Activated CD8-positive, alpha-beta memory T cell treated with anti-CD3 and anti-CD28 coated beads, Interleukin-2, amount 10 ng/mL, durations not matched to agents 7 days and 5 days (primary cell): ENCODE measurements at regions of chr10 and their contacts with region 1.

Region 1: DNA sequence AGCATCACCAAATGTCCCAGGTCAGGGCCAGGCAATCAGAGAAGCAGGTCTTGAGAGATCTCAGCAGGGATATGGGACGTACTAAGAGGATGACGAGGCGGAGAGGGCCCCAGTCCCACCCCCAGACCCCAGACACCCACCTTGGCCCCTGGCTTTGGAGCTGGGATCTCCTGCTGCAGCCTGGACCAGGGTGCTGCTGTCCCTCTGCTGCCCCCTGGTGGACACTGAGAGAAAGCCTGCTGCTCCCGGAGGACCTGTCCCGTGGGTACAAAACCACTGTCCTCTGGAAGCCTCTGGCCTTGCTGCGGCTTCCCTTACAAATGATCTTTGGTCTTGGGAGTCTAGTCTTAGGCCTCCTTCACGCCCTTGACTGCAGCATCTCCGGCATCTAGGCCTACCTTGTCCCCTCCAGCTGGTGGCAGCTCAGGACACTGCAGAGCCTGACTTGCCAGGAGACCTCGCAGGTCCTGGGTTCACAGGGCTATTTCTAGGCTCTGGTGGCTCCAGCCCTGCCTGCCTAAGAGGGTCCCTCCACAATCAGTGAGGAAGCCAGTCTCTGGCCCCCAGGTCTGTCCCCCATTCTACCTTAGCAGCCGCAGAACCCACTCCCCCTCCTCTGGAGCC is 97.1 kb downstream of the RGS10 start:
- DNase-seq: peak; percentile 87
- ATAC-seq: peak; percentile 85
- H3K4me3 Mint-ChIP-seq: no peak overlapping the region
- H3K27ac Mint-ChIP-seq: no peak overlapping the region
- H3K4me1 Mint-ChIP-seq: peaks cover 6% of the 10 kb centered on the region
- H3K27me3 Mint-ChIP-seq: no peaks in the 10 kb centered on the region

Region 2: GRCh38 chr10:119199231-119199992 is 246.0 kb before region 1 on chr10:
- CTCF ChIA-PET with region 1: interaction called, 46 read pairs
- DNase-seq: peak; percentile 64
- ATAC-seq: peak; percentile 82
- H3K4me3 Mint-ChIP-seq: no peak overlapping the region
- H3K27ac Mint-ChIP-seq: no peak overlapping the region
- H3K4me1 Mint-ChIP-seq: peaks cover 14% of the 10 kb centered on the region
- H3K27me3 Mint-ChIP-seq: peaks cover 4% of the 10 kb centered on the region

Region 3: GRCh38 chr10:119461380-119461779 is 16.0 kb after region 1 on chr10:
- CTCF ChIA-PET with region 1: interaction called, 10 read pairs
- DNase-seq: no peak
- ATAC-seq: no peak
- H3K4me3 Mint-ChIP-seq: no peak overlapping the region
- H3K27ac Mint-ChIP-seq: no peak overlapping the region
- H3K4me1 Mint-ChIP-seq: peaks cover 20% of the 10 kb centered on the region
- H3K27me3 Mint-ChIP-seq: peaks cover 2% of the 10 kb centered on the region

Region 4: GRCh38 chr10:119466655-119467054 is 21.2 kb after region 1 on chr10:
- CTCF ChIA-PET with region 1: interaction called, 10 read pairs
- DNase-seq: peak; percentile 81
- ATAC-seq: peak; percentile 90
- H3K4me3 Mint-ChIP-seq: no peak overlapping the region
- H3K27ac Mint-ChIP-seq: peak overlapping the region; percentile 49
- H3K4me1 Mint-ChIP-seq: peaks cover 22% of the 10 kb centered on the region
- H3K27me3 Mint-ChIP-seq: peaks cover 4% of the 10 kb centered on the region

Region 5: DNA sequence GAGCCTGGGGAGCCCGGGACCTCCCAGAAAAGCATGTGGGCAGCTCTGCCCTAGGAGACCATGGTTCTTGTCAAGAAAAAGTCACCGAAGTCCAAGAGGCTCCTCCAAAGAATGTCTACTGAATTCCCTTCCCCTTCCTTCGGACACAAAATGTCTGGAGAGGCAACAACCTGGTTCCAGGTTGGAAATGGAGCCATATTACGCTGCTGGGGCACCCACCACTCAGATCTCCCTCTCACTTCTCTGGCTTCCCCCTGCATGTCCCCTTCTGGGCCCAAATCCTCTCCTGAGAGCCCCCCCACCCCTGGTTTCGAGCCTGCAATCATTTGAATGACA is 44.5 kb after region 1 on chr10:
- CTCF ChIA-PET with region 1: interaction called, 51 read pairs
- DNase-seq: no peak
- ATAC-seq: no peak
- H3K4me3 Mint-ChIP-seq: peak overlapping the region; percentile 13
- H3K27ac Mint-ChIP-seq: peak overlapping the region; percentile 92
- H3K4me1 Mint-ChIP-seq: peaks cover 46% of the 10 kb centered on the region
- H3K27me3 Mint-ChIP-seq: no peaks in the 10 kb centered on the region

Region 6: DNA sequence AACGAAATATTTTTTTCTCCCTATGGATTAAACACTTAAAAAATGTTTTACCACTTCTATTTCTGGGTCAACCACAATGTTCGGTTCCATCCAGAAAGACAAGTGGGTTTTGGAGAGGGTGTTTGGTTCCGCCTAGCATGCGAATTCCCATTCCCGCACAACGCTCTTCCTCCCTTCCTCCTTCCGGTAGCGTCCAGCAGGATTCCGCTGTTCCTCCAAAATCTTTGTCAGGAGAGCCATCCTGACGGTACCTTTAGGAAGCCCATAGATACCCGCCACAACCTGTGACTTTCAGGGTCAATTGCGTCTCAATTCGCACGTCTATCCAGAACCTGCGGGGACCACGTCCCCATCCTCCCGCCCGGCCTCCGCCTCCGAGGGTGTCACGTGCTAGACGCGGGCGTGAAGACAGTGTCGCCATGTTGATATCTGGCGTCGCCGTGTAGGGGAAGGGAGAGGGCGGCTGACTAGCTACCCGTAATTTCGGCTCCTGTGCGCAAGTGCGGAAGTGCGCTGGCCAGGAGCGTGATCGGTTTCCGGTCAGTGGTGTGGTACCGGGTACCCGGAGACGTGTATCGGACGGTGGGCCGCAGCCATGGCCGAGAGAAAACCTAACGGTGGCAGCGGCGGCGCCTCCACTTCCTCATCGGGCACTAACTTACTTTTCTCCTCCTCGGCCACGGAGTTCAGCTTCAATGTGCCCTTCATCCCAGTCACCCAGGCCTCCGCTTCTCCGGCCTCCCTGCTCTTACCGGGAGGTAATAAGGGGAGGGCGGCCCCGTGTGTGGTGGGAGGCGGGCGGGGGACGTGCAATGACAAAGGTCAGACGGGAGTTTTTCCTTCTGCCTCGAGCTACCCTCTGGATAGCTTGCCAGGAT is 447.0 kb after region 1 on chr10 and contains the start of gene SEC23IP:
- CTCF ChIA-PET with region 1: no interaction called
- DNase-seq: peak; percentile 97
- ATAC-seq: peak; percentile 99
- H3K4me3 Mint-ChIP-seq: peak within 1 kb of the TSS; percentile 97
- H3K27ac Mint-ChIP-seq: peak within 1 kb of the TSS; percentile 95
- H3K4me1 Mint-ChIP-seq: peaks cover 36% of the 10 kb centered on the region
- H3K27me3 Mint-ChIP-seq: peaks cover 5% of the 10 kb centered on the region
- total RNA-seq, gene SEC23IP: 62.9 to 72.8 TPM